ENCODE measurements at regions of chr3 and their contacts with region 1.

Region 1: GRCh38 chr3:177314897-177315296 is 117.6 kb upstream of the TBL1XR1 start:
- DNase-seq: peak; percentile 13
- H3K4me3 Mint-ChIP-seq: no peak overlapping the region
- H3K27ac Mint-ChIP-seq: peak overlapping the region; percentile 18
- H3K4me1 Mint-ChIP-seq: peaks cover 23% of the 10 kb centered on the region
- H3K27me3 Mint-ChIP-seq: peaks cover 2% of the 10 kb centered on the region

Region 2: DNA sequence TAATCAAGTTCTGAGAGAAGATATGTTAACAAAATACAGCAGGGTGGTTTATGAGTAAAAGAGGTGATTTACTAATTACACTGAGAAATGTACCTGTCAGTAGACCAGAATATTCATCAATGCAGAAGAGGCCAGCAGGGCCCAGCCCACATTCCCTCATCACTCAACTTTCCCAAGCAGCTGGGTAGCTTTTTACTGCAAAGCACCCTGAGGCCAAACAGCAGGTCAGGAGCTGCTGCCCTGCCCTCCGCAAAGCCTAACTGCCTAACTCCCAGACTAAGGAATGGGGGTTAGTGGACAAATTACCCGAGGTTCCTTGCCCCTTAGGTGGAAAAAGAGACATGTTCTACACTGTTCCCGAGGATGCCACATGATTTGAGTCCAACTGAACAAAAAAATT is 225.8 kb before region 1 on chr3:
- CTCF ChIA-PET with region 1: no interaction called
- POLR2A ChIA-PET with region 1: no interaction called
- intact Hi-C with region 1: no loop called
- DNase-seq: no peak
- H3K4me3 Mint-ChIP-seq: no peak overlapping the region
- H3K27ac Mint-ChIP-seq: no peak overlapping the region
- H3K4me1 Mint-ChIP-seq: peaks cover 64% of the 10 kb centered on the region
- H3K27me3 Mint-ChIP-seq: no peaks in the 10 kb centered on the region

Region 3: DNA sequence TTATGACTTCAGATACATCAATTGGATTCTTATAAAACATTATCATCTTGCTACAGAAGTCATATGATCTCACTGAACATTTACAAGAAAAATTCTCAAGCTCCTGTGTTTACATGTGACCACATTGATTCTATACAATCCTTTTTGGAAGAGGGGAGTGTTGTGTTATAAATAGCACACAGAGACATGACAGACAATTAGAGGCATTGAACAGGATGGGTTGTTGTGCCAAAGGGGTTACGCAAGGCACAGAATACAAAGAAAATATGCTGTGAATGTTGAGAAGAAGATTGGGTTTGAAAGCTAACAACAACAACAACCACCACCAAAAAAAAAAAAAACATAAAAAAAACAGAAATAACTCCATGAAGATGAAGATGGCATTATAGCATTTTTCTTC is 85.1 kb before region 1 on chr3:
- CTCF ChIA-PET with region 1: no interaction called
- POLR2A ChIA-PET with region 1: no interaction called
- intact Hi-C with region 1: no loop called
- DNase-seq: no peak
- H3K4me3 Mint-ChIP-seq: no peak overlapping the region
- H3K27ac Mint-ChIP-seq: no peak overlapping the region
- H3K4me1 Mint-ChIP-seq: no peaks in the 10 kb centered on the region
- H3K27me3 Mint-ChIP-seq: no peaks in the 10 kb centered on the region

Region 4: GRCh38 chr3:177284383-177284881 is 30.5 kb before region 1 on chr3:
- CTCF ChIA-PET with region 1: no interaction called
- POLR2A ChIA-PET with region 1: no interaction called
- intact Hi-C with region 1: loop called (anchors 5 kb)
- DNase-seq: peak; percentile 59
- H3K4me3 Mint-ChIP-seq: no peak overlapping the region
- H3K27ac Mint-ChIP-seq: no peak overlapping the region
- H3K4me1 Mint-ChIP-seq: peaks cover 23% of the 10 kb centered on the region
- H3K27me3 Mint-ChIP-seq: no peaks in the 10 kb centered on the region

Region 5: GRCh38 chr3:177337541-177338331 is 22.8 kb after region 1 on chr3:
- CTCF ChIA-PET with region 1: no interaction called
- POLR2A ChIA-PET with region 1: interaction called, 4 read pairs
- intact Hi-C with region 1: loop called (anchors 1 kb)
- DNase-seq: peak; percentile 91
- H3K4me3 Mint-ChIP-seq: no peak overlapping the region
- H3K27ac Mint-ChIP-seq: peak overlapping the region; percentile 77
- H3K4me1 Mint-ChIP-seq: peaks cover 29% of the 10 kb centered on the region
- H3K27me3 Mint-ChIP-seq: peaks cover 4% of the 10 kb centered on the region

Region 6: DNA sequence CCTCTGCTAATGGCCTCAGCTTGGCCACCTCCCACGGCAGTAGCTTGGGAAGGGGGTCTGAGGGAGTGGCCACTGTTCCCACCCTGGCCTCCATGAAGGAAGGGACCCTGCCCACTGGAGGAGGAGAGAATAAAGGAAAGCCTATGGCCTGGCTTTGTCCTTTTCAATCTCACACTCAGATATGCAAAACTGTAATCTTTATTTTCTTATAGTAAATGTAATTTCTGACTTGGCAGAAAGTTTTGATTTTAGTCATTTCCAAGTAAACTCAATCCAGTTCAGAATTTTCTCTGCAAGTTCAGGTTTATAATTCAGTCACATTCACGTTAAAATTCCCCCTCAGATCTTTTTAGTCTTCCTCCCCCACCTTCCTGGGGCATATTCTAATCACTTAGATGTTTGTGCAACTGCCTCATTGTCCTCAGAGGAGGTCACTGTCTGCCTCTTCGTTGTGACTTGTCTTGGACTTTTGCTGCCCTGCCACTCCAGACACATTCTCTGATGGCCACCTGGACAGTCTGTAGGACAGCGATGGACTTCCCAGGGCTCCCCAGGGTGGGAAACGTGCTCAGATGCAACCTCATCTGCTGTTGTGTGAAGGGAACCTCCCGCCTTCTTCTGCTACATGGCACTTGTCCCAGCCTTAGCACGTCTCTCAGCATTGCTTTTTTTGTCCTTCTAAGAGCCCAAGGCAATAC is 105.2 kb after region 1 on chr3:
- CTCF ChIA-PET with region 1: no interaction called
- POLR2A ChIA-PET with region 1: no interaction called
- intact Hi-C with region 1: loop called (anchors 1 kb)
- DNase-seq: peak; percentile 36
- H3K4me3 Mint-ChIP-seq: no peak overlapping the region
- H3K27ac Mint-ChIP-seq: peak overlapping the region; percentile 76
- H3K4me1 Mint-ChIP-seq: peaks cover 37% of the 10 kb centered on the region
- H3K27me3 Mint-ChIP-seq: no peaks in the 10 kb centered on the region